HAP-1 (cell line): ENCODE measurements at regions of chr4 and their contacts with region 1.

Region 1: DNA sequence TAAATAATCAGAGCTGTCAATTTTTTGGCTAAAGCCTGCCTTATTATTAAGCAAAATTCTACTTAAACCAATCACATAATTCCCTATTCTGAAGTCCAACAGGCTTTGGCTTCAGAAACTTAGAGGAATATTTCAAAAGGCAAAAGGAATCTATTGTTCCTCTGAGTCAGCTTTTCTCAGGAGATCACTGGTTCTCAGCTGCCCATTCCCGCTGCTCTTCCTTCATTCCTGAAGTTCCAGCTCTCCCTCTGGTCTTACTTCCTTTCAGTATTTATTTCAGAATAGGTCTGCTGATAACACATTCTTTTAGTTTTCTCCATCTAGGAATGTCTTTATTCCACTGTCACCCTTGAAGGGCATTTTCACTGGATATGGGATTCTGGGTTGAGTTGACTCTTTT is 133.7 kb downstream of the SOWAHB start:
- DNase-seq: no peak
- H3K4me3 ChIP-seq: no peak overlapping the region
- H3K4me1 ChIP-seq: peaks cover under 1% of the 10 kb centered on the region; the same call in 1 of the 2 replicates
- H3K27me3 ChIP-seq: no peaks in the 10 kb centered on the region

Region 2: DNA sequence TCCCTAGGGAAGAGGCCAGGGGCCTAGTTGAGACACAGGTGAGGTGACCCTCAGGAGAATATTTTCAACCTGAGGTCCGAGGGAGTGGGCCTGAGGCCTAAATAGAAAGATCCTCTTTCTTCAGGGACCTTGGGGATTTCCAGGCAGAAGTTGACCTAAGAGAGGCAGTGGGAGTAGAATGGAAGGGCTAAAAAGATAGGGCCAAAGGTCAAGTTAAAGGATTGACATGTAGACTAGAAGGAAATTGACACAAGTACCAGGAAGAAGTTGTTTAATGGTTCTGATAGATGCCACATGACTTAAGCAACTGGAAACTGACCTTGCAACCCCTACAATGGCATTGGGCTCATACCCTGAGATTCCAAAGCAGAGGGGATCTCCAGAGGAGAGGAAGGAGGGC is 252.3 kb before region 1 on chr4:
- in situ Hi-C with region 1: loop called (anchors 5 kb)
- DNase-seq: no peak
- H3K4me3 ChIP-seq: no peak overlapping the region
- H3K4me1 ChIP-seq: no peaks in the 10 kb centered on the region
- H3K27me3 ChIP-seq: no peaks in the 10 kb centered on the region